ENCODE measurements at regions of chr5 and their contacts with region 1.

Region 1: DNA sequence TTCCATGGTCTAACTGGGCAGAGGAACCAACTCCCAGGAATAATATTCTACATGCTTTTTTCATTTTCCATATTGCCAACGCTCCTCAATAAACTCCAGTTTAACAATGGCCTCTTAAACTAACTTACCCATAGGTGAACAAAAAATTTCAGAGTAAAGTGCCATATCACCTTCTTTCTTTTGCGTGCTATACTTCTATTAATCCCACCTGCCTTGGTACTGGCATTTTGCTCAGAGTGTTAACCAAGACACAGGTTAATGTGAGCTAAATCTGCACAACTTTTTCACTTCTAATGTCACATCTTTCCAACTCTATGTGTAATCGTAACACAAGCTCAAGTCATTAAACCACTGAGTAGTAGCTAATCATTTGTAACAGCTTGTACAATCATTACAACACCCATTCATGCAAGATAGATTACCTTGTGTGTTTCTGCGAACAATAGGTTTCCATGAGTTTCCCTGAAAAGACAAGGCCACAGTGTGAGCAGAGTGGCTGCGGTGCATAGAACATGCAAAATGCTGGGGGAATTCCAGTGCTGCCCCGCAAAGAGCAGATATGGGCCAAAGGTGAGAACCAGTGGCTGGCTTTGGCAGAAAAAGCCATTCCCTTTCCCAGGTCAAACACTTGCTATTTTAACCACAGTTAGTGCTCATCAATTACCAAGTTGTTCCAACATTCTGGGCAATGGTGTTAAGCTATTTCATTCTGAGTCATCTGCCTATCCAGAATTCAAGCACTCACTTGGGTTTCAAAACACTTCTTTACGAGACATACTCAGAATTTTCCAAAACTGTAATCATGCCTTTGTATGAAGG is 42.8 kb downstream of the TIMD4 start:
- DNase-seq: peak; percentile 39
- H3K4me3 Mint-ChIP-seq: peak overlapping the region; percentile 64
- H3K27ac Mint-ChIP-seq: peak overlapping the region; percentile 89
- H3K4me1 Mint-ChIP-seq: peaks cover 57% of the 10 kb centered on the region
- H3K27me3 Mint-ChIP-seq: no peaks in the 10 kb centered on the region

Region 2: GRCh38 chr5:156402387-156402921 is 517.8 kb before region 1 on chr5:
- intact Hi-C with region 1: loop called (anchors 10 kb)
- DNase-seq: peak; percentile 9
- H3K4me3 Mint-ChIP-seq: no peak overlapping the region
- H3K27ac Mint-ChIP-seq: no peak overlapping the region
- H3K4me1 Mint-ChIP-seq: peaks cover 8% of the 10 kb centered on the region
- H3K27me3 Mint-ChIP-seq: peaks cover 3% of the 10 kb centered on the region

Region 3: DNA sequence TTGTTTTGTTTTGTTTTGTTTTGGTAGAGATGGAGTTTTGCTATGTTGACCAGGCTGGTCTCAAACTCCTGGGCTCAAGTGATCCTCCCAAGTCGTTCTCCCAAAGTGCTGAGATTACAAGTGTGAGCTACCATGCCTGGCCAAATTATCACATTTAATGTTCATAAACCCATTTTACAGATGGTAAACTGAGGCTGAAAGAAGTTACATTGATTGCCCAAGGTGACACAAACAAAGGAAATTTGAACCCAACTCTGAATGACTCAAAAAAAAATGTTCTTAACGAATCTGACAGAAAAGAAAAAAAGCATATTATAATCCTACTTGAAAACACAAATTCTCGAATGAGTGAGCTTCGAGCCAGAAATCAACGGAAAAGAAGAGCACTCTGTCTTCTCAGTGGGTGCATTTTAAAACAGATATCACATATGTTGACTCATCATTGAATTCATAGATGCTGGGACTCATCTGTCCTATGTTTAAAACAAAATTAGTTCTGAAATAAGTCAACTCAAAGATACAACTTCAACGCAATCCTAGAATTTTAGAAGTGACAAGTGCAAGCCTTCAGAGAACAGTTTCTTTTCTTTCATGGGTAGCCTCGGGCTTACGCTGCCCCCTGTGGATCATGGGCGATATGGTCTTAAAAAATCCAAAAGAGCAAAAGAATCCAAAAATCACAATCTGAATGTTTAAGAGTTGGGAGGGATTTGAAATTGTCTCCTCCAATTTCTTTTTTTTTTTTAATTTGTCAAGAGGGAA is 14.4 kb after region 1 on chr5:
- intact Hi-C with region 1: loop called (anchors 1 kb)
- DNase-seq: peak; percentile 42
- H3K4me3 Mint-ChIP-seq: no peak overlapping the region
- H3K27ac Mint-ChIP-seq: peak overlapping the region; percentile 81
- H3K4me1 Mint-ChIP-seq: peaks cover 45% of the 10 kb centered on the region
- H3K27me3 Mint-ChIP-seq: no peaks in the 10 kb centered on the region

Region 4: DNA sequence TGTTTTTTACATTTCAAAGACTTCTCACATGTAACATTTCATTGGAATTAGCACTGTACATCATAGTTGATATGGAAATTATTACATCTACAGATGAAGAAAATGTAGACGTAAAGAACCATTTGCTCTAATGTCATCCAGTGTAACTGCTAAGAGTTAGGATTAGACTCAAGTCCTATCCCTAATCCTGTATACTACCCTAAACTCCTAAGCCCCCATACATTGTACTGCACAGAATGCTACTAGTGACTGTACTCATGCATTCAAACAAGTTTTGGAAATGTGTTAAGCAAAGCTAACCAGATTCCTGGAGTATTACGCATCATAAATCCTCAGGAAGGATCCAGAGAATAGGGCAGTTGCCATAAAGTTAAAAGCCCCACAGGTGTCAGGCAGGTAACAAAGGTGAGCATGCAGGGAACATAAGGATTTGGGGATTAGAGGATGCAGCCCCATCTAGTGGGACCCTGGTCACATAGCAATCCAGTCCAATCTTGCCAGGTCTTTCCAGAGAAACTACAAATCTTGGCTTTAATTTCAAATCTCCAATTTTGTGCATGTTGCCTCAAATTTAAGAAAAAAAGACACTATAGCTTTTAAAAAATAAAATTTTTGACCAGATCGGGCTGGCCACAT is 106.7 kb after region 1 on chr5:
- intact Hi-C with region 1: loop called (anchors 1 kb)
- DNase-seq: no peak
- H3K4me3 Mint-ChIP-seq: no peak overlapping the region
- H3K27ac Mint-ChIP-seq: peak overlapping the region; percentile 89
- H3K4me1 Mint-ChIP-seq: peaks cover 85% of the 10 kb centered on the region
- H3K27me3 Mint-ChIP-seq: no peaks in the 10 kb centered on the region

Region 5: DNA sequence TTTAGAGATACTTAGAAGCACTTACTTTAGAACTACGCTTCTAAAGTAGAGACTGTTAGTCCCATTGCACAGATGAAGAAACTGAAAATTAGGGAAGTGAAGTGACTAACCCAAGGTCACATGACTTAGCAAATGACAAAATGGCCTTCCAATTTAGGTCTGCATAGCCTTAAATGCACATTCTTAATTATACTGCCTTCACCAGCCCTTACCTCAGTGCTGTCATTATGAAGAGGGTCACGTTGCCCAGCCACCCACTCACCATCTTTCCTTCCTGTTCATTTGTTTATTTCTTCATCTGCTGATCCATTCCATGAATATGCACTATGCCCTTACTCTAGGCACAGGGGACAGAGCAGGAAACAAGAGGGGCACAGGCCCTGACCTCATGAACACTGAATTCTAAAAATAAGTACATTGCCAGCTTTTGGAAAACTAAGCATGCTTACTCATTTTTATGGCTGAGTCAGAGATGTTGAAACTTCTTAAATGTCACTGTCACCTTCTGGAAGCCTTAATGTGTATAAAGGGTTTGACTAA is 180.0 kb after region 1 on chr5:
- intact Hi-C with region 1: loop called (anchors 1 kb)
- DNase-seq: no peak
- H3K4me3 Mint-ChIP-seq: peak overlapping the region; percentile 10
- H3K27ac Mint-ChIP-seq: peak overlapping the region; percentile 94
- H3K4me1 Mint-ChIP-seq: peaks cover 30% of the 10 kb centered on the region
- H3K27me3 Mint-ChIP-seq: no peaks in the 10 kb centered on the region

Region 6: GRCh38 chr5:157142317-157143126 is 222.3 kb after region 1 on chr5 and contains the start of gene MED7:
- intact Hi-C with region 1: loop called (anchors 5 kb)
- DNase-seq: peak; percentile 95
- H3K4me3 Mint-ChIP-seq: peak within 1 kb of the TSS; percentile 97
- H3K27ac Mint-ChIP-seq: peak within 1 kb of the TSS; percentile 97
- H3K4me1 Mint-ChIP-seq: peaks cover 31% of the 10 kb centered on the region
- H3K27me3 Mint-ChIP-seq: no peaks in the 10 kb centered on the region
- total RNA-seq, gene MED7: 12.5 and 13.1 TPM in 2 replicates

Region 7: DNA sequence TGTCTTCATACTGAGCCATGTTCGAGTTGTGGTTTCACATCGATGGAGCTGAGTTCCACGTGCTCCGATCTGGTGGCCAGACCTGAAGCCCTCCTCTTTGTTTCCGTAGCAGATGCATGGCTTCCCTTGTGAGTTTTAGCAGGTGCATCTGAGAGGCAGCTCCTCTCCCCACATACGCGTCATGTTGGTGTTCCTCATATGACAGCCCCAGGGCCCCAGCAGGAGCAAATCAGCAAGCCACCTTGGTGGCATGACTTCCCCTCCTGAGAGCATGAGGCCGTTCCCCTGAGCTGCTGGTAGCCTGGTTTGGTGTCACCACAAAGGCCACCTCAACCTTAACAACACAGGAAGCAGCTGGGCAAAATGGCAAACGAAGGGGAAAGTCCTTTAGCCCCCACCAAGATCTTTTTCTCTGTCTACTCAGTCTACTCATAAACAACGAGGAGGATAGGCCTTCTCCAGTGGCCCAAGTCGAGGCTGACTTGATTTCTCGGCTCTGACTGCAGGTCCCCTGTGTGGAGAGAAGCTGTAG is 351.6 kb after region 1 on chr5:
- intact Hi-C with region 1: loop called (anchors 5 kb)
- DNase-seq: peak; percentile 85
- H3K4me3 Mint-ChIP-seq: peak overlapping the region; percentile 82
- H3K27ac Mint-ChIP-seq: peak overlapping the region; percentile 99
- H3K4me1 Mint-ChIP-seq: peaks cover 88% of the 10 kb centered on the region
- H3K27me3 Mint-ChIP-seq: no peaks in the 10 kb centered on the region

Region 8: DNA sequence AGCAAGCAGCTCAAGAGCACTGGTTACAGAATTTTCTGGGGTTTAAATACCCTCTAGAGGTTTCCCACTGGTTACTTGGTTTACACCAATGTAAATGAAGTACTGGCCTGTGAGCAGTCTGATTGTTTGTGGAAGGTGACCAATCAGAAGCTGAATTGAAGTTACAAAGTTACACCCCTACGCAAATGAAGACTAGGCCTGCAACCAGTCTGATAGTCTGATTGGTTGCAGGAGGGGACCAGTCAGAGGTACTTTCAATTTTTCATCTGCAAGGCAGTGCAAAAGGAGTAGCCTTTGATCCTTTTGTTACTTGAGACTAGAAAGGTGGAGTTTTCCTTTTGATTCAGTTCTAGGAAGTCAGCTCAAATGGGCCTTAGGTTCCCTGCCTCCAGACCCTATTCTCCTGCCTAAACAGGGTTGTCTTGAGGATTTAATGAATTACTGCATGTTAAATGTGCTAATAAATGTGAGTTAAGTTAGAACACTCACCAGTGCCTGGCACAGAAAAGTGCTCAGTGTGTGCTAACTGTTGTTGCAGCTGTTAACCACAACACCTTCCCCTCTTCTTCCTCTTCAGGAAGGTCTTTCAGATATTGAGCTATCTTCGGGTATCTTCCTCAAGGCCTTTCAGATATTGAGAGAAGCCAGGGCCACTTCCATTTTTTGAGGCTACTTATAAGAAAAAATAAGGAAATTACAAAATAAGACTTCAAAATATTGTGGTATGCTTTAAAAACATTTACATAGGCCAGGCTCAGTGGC is 970.8 kb after region 1 on chr5:
- intact Hi-C with region 1: no loop called
- DNase-seq: no peak
- H3K4me3 Mint-ChIP-seq: no peak overlapping the region
- H3K27ac Mint-ChIP-seq: no peak overlapping the region
- H3K4me1 Mint-ChIP-seq: peaks cover 17% of the 10 kb centered on the region
- H3K27me3 Mint-ChIP-seq: no peaks in the 10 kb centered on the region